Mammary epithelial cell (primary cell): ENCODE measurements at regions of chr11 and their contacts with region 1.

Region 1: DNA sequence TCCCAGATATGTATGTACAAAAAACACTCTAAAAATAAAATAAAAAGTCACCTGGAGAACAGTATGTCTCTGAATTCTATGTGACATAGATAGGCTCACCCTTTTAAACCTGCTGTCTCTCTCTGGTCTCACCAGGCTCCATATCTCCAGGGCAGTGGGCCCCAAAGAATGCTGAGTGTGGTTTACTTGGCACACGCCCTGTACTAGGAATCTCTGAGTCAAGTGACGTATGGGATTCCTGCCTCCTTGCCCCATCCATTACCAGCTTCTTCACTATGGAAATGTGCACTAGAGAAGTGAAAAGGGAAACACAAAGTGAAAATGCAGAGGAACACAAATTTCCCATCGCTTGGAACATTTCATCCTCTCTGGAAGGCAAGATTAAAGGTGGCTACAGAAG is 722.2 kb upstream of the TENM4 start:
- DNase-seq: peak; percentile 56
- H3K4me3 ChIP-seq: no peak overlapping the region
- H3K27ac ChIP-seq: peak overlapping the region; percentile 12
- H3K4me1 ChIP-seq: peaks cover 14% of the 10 kb centered on the region
- H3K27me3 ChIP-seq: no peaks in the 10 kb centered on the region
- CTCF ChIP-seq: no peak

Region 2: DNA sequence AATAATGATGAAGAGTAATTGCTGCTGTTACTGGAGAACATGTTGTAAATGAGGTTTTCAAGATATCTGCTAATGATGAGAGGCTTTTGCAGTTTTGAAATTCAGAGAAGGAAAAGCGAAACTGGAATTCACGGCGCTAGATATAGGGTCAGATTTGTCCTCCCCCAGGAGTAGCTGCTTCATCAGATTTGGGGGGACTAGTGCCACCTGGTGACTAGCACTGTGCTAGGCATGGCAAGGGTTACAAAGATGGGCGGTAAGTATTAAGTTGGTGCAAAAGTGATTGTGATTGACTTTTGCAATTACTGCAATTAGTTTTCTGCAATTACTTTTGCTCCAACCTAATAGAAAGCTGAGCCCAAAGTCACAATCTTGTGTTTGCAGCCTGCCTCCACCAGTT is 157.8 kb after region 1 on chr11:
- CTCF ChIA-PET with region 1: no interaction called
- dilution Hi-C with region 1: no loop called
- in situ Hi-C with region 1: no loop called
- intact Hi-C with region 1: loop called (anchors 10 kb)
- DNase-seq: no peak
- H3K4me3 ChIP-seq: no peak overlapping the region
- H3K27ac ChIP-seq: no peak overlapping the region
- H3K4me1 ChIP-seq: no peaks in the 10 kb centered on the region
- H3K27me3 ChIP-seq: no peaks in the 10 kb centered on the region
- CTCF ChIP-seq: peak; percentile 31 to 52

Region 3: GRCh38 chr11:80963496-80963895 is 800.5 kb after region 1 on chr11:
- CTCF ChIA-PET with region 1: no interaction called
- dilution Hi-C with region 1: no loop called
- in situ Hi-C with region 1: no loop called
- intact Hi-C with region 1: loop called (anchors 2 kb)
- DNase-seq: no peak
- H3K4me3 ChIP-seq: no peak overlapping the region
- H3K27ac ChIP-seq: no peak overlapping the region
- H3K4me1 ChIP-seq: peaks cover 22% of the 10 kb centered on the region
- H3K27me3 ChIP-seq: no peaks in the 10 kb centered on the region
- CTCF ChIP-seq: peak in 1 of 2 donors; percentile 31

Region 4: DNA sequence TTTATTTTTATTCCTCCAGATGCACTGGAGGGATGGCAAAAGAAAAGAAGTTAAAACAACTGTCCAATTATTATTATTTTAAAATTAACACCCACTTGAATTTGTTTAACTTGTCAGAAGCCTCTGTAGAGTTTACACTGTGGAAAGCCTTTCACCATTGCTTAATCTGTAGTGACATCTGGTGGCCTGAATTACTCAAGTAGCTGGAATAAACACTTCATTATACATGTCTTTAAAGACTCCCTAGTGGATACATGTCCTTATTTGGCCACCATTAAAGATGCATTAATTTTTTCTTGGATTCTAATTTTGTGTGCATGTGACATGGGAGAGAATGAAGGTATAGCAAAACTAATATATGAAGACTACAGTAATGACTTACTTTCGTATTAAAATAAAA is 1074.1 kb after region 1 on chr11:
- CTCF ChIA-PET with region 1: no interaction called
- dilution Hi-C with region 1: no loop called
- in situ Hi-C with region 1: no loop called
- intact Hi-C with region 1: loop called (anchors 10 kb)
- DNase-seq: peak; percentile 28
- H3K4me3 ChIP-seq: no peak overlapping the region
- H3K27ac ChIP-seq: no peak overlapping the region
- H3K4me1 ChIP-seq: no peaks in the 10 kb centered on the region
- H3K27me3 ChIP-seq: peaks cover 2% of the 10 kb centered on the region
- CTCF ChIP-seq: peak in 1 of 2 donors; percentile 58